ENCODE measurements at regions of chr12 and their contacts with region 1.

Region 1: GRCh38 chr12:120421701-120422100 is 16.2 kb upstream of the COX6A1 start:
- DNase-seq: no peak
- ATAC-seq: no peak
- H3K4me3 ChIP-seq: no peak overlapping the region
- H3K27ac ChIP-seq: no peak overlapping the region
- H3K4me1 ChIP-seq: no peaks in the 10 kb centered on the region
- H3K27me3 ChIP-seq: peaks cover 0 to 8% (median 8%) of the 10 kb centered on the region in 3 donors
- CTCF ChIP-seq: no peak
- POLR2A ChIP-seq: no peak

Region 2: GRCh38 chr12:120346681-120347080 is 75.0 kb before region 1 on chr12:
- in situ Hi-C with region 1: loop called in 3 of 4 experiments (anchors 10 kb)
- intact Hi-C with region 1: loop called (anchors 5 kb)
- DNase-seq: no peak
- ATAC-seq: no peak
- H3K4me3 ChIP-seq: no peak overlapping the region
- H3K27ac ChIP-seq: no peak overlapping the region
- H3K4me1 ChIP-seq: no peaks in the 10 kb centered on the region
- H3K27me3 ChIP-seq: peaks cover 0 to 4% (median 0%) of the 10 kb centered on the region in 3 donors
- CTCF ChIP-seq: no peak
- POLR2A ChIP-seq: no peak

Region 3: DNA sequence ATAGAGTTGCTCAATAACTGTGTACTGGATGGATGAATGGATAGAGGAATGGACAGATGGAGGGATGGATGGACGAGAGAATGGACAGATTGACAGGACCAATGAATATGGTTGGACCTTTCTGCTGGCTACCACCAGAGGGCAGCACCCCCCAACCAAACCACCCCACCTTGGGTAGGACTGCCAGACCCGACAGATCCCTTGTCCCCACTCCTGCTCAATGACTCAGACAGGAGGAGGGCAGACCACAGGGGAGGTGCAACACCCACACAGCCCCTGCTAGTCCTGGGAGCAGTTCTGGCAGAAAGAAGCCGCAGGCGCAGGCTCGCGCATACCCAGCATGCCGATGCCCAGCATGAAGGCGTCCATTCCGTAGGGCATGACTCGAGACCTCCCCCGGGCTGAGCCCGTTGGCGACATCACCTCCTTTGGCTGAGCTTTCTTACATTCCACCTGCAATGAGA is 65.1 kb before region 1 on chr12:
- in situ Hi-C with region 1: loop called in 2 of 4 experiments (anchors 10 kb)
- intact Hi-C with region 1: no loop called
- DNase-seq: peak; percentile 48 to 63
- ATAC-seq: peak; percentile 83 to 92
- H3K4me3 ChIP-seq: no peak overlapping the region
- H3K27ac ChIP-seq: no peak overlapping the region
- H3K4me1 ChIP-seq: peaks cover 0 to 3% of the 10 kb centered on the region in 2 donors
- H3K27me3 ChIP-seq: peaks cover 3 to 6% (median 5%) of the 10 kb centered on the region in 3 donors
- CTCF ChIP-seq: peak; percentile 52 to 86 (median 83)
- POLR2A ChIP-seq: no peak

Region 4: GRCh38 chr12:120528861-120529525 is 107.3 kb after region 1 on chr12 and contains the start of gene COQ5:
- in situ Hi-C with region 1: no loop called
- intact Hi-C with region 1: no loop called
- DNase-seq: peak; percentile 83 to 89
- ATAC-seq: peak; percentile 92 to 96
- H3K4me3 ChIP-seq: peak within 1 kb of the TSS; percentile 72 to 93 (median 87)
- H3K27ac ChIP-seq: peak within 1 kb of the TSS; percentile 89 to 97 (median 96)
- H3K4me1 ChIP-seq: peaks cover 5 to 9% of the 10 kb centered on the region in 2 donors
- H3K27me3 ChIP-seq: no peaks in the 10 kb centered on the region
- CTCF ChIP-seq: peak in 1 of 5 experiments; percentile 11
- POLR2A ChIP-seq: peak; percentile 27 to 47
- total RNA-seq, gene COQ5: 34.5 to 47.3 (median 39.2) TPM